Activated T-helper 2 cell treated with anti-CD3 and anti-CD28 coated beads, Interferon-gamma antibody, Interleukin-2, Interleukin-4, amounts not matched to agents 10 μg/mL and 5 μg/mL and 100 μg/mL, durations not matched to agents 14 hours and 24 hours and 36 hours (primary cell): ENCODE measurements at regions of chr4 and their contacts with region 1.

Region 1: DNA sequence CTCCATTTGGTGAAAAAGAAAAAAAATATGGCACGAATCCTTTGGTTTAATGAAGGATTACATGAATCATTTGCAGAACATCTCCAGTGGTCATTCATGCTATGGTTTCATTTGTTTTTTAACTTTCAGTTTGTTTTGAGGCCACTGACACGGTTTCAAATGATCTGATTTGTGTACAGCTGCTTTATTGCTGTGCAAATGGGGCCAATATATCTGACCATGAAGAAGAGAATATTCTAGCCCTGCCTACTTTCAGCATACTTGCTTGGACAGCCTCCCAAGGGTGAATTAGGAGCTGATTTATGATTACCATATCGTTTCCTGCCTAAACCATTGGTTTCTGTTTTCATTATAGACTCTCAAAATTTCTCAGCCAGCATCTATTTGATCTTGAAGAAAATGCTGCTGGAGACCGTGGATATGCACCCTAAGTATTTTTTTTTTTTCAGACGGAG is 30.7 kb downstream of the SPARCL1 start:
- DNase-seq: no peak
- H3K4me3 Mint-ChIP-seq: no peak overlapping the region
- H3K27ac Mint-ChIP-seq: no peak overlapping the region
- H3K4me1 Mint-ChIP-seq: peaks cover 17% of the 10 kb centered on the region
- H3K27me3 Mint-ChIP-seq: no peaks in the 10 kb centered on the region

Region 2: GRCh38 chr4:87306056-87306455 is 192.4 kb before region 1 on chr4:
- intact Hi-C with region 1: loop called (anchors 2 kb)
- DNase-seq: no peak
- H3K4me3 Mint-ChIP-seq: no peak overlapping the region
- H3K27ac Mint-ChIP-seq: no peak overlapping the region
- H3K4me1 Mint-ChIP-seq: peaks cover 8% of the 10 kb centered on the region
- H3K27me3 Mint-ChIP-seq: peaks cover 13% of the 10 kb centered on the region

Region 3: GRCh38 chr4:87451537-87451936 is 46.9 kb before region 1 on chr4:
- intact Hi-C with region 1: no loop called
- DNase-seq: no peak
- H3K4me3 Mint-ChIP-seq: no peak overlapping the region
- H3K27ac Mint-ChIP-seq: no peak overlapping the region
- H3K4me1 Mint-ChIP-seq: no peaks in the 10 kb centered on the region
- H3K27me3 Mint-ChIP-seq: no peaks in the 10 kb centered on the region

Region 4: GRCh38 chr4:87559109-87559837 is 60.8 kb after region 1 on chr4:
- intact Hi-C with region 1: loop called (anchors 5 kb)
- DNase-seq: peak; percentile 66
- H3K4me3 Mint-ChIP-seq: no peak overlapping the region
- H3K27ac Mint-ChIP-seq: peak overlapping the region; percentile 65
- H3K4me1 Mint-ChIP-seq: peaks cover 28% of the 10 kb centered on the region
- H3K27me3 Mint-ChIP-seq: no peaks in the 10 kb centered on the region

Region 5: DNA sequence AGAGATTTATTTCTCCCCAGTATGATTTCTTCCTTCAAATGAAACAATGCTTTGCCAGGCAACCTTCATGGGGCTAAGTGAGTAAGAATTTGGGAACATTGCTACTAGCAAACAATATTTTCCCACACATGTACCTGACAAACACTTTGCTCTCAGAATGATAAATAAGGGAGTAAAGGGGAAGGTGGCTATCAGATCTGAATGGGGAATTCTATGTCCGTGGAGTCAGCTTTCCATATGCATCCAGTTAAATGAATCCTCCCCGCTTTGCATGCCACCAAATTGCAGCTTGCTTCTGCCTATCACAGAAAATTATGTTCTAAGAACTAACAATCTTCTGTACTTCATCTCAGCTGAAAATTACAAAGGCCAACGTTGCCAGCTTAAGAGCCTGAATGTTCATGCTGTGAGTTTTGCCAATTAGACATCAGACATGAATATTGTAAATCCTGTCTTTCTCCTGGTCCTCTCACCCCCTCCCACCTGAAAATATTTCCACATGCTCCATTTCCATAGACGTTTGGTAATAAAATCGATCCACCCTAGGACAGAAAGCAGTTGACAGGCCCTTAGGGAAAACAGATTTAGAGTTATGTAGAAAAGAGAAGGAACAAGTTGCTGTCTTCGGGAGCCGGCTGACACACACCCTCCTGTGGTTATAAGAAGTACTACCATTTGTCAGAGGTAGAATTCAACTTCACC is 340.6 kb after region 1 on chr4:
- intact Hi-C with region 1: loop called (anchors 5 kb)
- DNase-seq: no peak
- H3K4me3 Mint-ChIP-seq: no peak overlapping the region
- H3K27ac Mint-ChIP-seq: no peak overlapping the region
- H3K4me1 Mint-ChIP-seq: no peaks in the 10 kb centered on the region
- H3K27me3 Mint-ChIP-seq: peaks cover 29% of the 10 kb centered on the region